ENCODE measurements at regions of chr11 and their contacts with region 1.

Region 1: GRCh38 chr11:1852877-1853276 is at the start of gene LSP1:
- DNase-seq: peak; percentile 69 to 93 (median 87)
- H3K4me3 ChIP-seq: peak within 1 kb of the TSS; percentile 63
- H3K4me3 Mint-ChIP-seq: peak within 1 kb of the TSS; percentile 92 to 99 (median 99)
- H3K27ac ChIP-seq: peak within 1 kb of the TSS; percentile 74
- H3K27ac Mint-ChIP-seq: peak within 1 kb of the TSS; percentile 90 to 100 (median 98)
- H3K4me1 ChIP-seq: peaks cover 81% of the 10 kb centered on the region
- H3K4me1 Mint-ChIP-seq: peaks cover 50 to 73% (median 55%) of the 10 kb centered on the region in 3 donors
- H3K27me3 ChIP-seq: no peaks in the 10 kb centered on the region
- H3K27me3 Mint-ChIP-seq: no peaks in the 10 kb centered on the region
- total RNA-seq, gene LSP1: 226 to 230 TPM

Region 2: DNA sequence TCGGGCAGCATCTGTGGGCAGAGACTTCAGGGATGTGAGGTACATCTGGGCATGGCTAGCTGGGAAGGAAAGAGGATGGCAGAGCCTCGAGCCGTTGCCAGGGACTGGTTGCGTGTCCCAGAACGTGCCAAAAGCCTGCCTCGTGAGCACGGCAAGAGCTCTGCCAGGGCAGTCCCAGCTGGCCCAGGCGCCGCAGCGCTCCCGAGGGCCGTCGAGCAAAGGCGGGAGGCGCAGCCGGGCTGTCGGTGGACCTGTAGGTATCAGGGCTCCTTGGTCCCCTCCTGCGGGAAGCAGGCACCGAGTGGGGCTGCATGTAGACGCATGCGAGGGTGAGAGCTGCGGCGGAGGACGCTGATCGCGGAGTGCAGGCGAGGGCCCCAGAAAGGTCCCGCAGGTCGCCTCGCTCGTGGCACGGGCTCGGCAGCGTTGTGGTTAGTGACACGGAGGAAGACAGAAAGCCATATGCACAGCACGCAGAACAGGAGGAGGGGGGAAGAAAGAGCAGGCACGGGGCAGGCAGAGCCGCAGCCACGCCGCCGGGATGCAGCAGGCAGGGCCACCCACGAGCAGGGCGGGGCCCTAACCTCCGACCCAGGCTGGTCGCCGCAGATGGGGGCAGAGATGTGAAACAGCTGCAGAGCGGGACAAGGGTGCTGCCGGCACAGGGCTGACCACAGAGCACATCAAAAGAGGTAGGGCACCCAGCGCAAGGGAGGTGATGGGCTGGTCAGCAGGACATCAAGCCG is 18.0 kb after region 1 on chr11:
- CTCF ChIA-PET with region 1: interaction called, 10 read pairs
- POLR2A ChIA-PET with region 1: interaction called, 7 read pairs
- DNase-seq: peak; percentile 35 to 72 (median 59)
- H3K4me3 ChIP-seq: peak overlapping the region; percentile 26
- H3K4me3 Mint-ChIP-seq: peak overlapping the region; percentile 37 to 90 (median 79)
- H3K27ac ChIP-seq: peak overlapping the region; percentile 4
- H3K27ac Mint-ChIP-seq: peak overlapping the region; percentile 68 to 98 (median 88)
- H3K4me1 ChIP-seq: peaks cover 40% of the 10 kb centered on the region
- H3K4me1 Mint-ChIP-seq: peaks cover 42 to 80% (median 57%) of the 10 kb centered on the region in 3 donors
- H3K27me3 ChIP-seq: no peaks in the 10 kb centered on the region
- H3K27me3 Mint-ChIP-seq: no peaks in the 10 kb centered on the region

Region 3: GRCh38 chr11:1882519-1883238 is 29.8 kb after region 1 on chr11:
- CTCF ChIA-PET with region 1: interaction called, 93 read pairs
- POLR2A ChIA-PET with region 1: no interaction called
- DNase-seq: peak; percentile 59 to 83 (median 75)
- H3K4me3 ChIP-seq: no peak overlapping the region
- H3K4me3 Mint-ChIP-seq: no peak overlapping the region
- H3K27ac ChIP-seq: no peak overlapping the region
- H3K27ac Mint-ChIP-seq: peak overlapping the region in 1 of 8 donors; percentile 38
- H3K4me1 ChIP-seq: peaks cover 8% of the 10 kb centered on the region
- H3K4me1 Mint-ChIP-seq: peaks cover 3 to 33% (median 13%) of the 10 kb centered on the region in 3 donors
- H3K27me3 ChIP-seq: no peaks in the 10 kb centered on the region
- H3K27me3 Mint-ChIP-seq: no peaks in the 10 kb centered on the region

Measured in CD8-positive, alpha-beta memory T cell (primary cell).